ENCODE measurements at regions of chr18 and their contacts with region 1.

Region 1: GRCh38 chr18:7566567-7567473 is at the start of gene PTPRM:
- DNase-seq: peak; percentile 94
- ATAC-seq: peak; percentile 95
- total RNA-seq, gene PTPRM: 102 TPM

Region 2: GRCh38 chr18:7221424-7222155 is 345.2 kb before region 1 on chr18:
- intact Hi-C with region 1: loop called (anchors 5 kb)
- DNase-seq: no peak
- ATAC-seq: peak; percentile 72

Region 3: GRCh38 chr18:7459851-7460770 is 106.7 kb before region 1 on chr18:
- intact Hi-C with region 1: loop called (anchors 2 kb)
- DNase-seq: peak; percentile 81
- ATAC-seq: peak; percentile 83

Region 4: GRCh38 chr18:7608781-7609201 is 42.0 kb after region 1 on chr18:
- intact Hi-C with region 1: loop called (anchors 5 kb)
- DNase-seq: no peak
- ATAC-seq: peak; percentile 76

Region 5: DNA sequence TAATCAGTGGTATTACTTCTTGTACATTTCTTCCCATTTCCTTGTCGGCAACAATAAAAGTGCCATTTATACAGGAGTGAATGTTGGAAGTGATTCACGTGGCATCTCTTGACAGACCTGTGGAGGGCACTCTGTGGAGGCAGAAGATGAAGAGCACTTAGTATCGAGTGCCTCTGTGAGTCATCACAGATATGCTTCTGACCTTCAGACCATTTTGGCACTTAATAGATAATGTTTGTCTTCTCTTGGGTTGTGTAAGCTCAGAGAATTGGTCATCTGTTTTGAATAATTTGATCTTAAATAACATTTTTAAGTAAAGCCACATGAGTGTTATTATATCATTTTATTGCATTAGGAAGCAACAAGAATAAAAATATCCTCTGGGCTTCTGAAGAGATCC is 305.7 kb after region 1 on chr18:
- intact Hi-C with region 1: loop called (anchors 10 kb)
- DNase-seq: no peak
- ATAC-seq: peak; percentile 59